PC-3 (cell line): ENCODE measurements at regions of chr13 and their contacts with region 1.

Region 1: GRCh38 chr13:27362064-27362883 is 62.1 kb upstream of the GTF3A start:
- DNase-seq: peak; percentile 88
- ATAC-seq: peak; percentile 86
- H3K4me3 ChIP-seq: peak overlapping the region; percentile 66
- H3K27ac ChIP-seq: no peak overlapping the region
- H3K4me1 ChIP-seq: peaks cover 7% of the 10 kb centered on the region
- H3K27me3 ChIP-seq: no peaks in the 10 kb centered on the region
- CTCF ChIP-seq: peak; percentile 82

Region 2: GRCh38 chr13:26929971-26930730 is 432.1 kb before region 1 on chr13:
- CTCF ChIA-PET with region 1: interaction called, 12 read pairs
- POLR2A ChIA-PET with region 1: no interaction called
- intact Hi-C with region 1: no loop called
- DNase-seq: peak; percentile 76
- ATAC-seq: peak; percentile 88
- H3K4me3 ChIP-seq: peak overlapping the region; percentile 34; the same call in 1 of the 2 replicates
- H3K27ac ChIP-seq: no peak overlapping the region
- H3K4me1 ChIP-seq: no peaks in the 10 kb centered on the region
- H3K27me3 ChIP-seq: peaks cover 26% of the 10 kb centered on the region
- CTCF ChIP-seq: peak; percentile 94

Region 3: DNA sequence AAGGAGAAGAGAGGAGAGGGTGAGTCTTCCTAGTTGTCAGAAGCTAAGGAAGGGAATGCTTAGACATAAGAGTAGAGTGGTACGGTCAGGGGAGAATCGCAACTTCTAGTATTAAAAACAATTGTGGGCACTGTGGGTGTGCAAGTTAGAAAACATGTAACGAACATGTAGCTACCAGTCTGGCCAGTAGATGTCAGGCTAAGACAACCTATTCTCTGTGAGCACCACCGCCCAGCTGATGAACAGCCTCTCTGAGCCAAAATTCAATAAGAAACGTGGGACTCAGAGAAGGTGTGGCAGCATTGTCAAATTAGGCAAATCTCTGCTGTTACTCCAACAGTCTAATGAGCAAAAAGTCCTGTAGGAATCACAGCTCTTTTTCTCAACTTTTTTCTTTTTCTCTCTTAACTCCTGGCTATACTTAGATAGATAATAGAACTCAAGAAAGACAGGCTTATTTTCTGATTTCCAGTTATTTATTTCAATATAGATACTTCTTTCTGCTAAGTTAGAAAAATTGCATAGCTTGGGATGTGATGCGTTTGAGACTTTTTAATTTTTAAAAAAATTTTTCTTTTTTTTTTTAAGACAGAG is 376.9 kb before region 1 on chr13:
- CTCF ChIA-PET with region 1: interaction called, 11 read pairs
- POLR2A ChIA-PET with region 1: no interaction called
- intact Hi-C with region 1: loop called (anchors 1 kb)
- DNase-seq: peak; percentile 87
- ATAC-seq: peak; percentile 63
- H3K4me3 ChIP-seq: peak overlapping the region; percentile 52
- H3K27ac ChIP-seq: peak overlapping the region; percentile 22; the same call in 1 of the 2 replicates
- H3K4me1 ChIP-seq: peaks cover 25% of the 10 kb centered on the region
- H3K27me3 ChIP-seq: no peaks in the 10 kb centered on the region
- CTCF ChIP-seq: peak; percentile 86

Region 4: GRCh38 chr13:27211771-27212364 is 150.4 kb before region 1 on chr13:
- CTCF ChIA-PET with region 1: no interaction called
- POLR2A ChIA-PET with region 1: no interaction called
- intact Hi-C with region 1: no loop called
- DNase-seq: peak; percentile 76
- ATAC-seq: peak; percentile 100
- H3K4me3 ChIP-seq: no peak overlapping the region
- H3K27ac ChIP-seq: peak overlapping the region; percentile 29; the same call in 1 of the 2 replicates
- H3K4me1 ChIP-seq: peaks cover 12% of the 10 kb centered on the region
- H3K27me3 ChIP-seq: no peaks in the 10 kb centered on the region
- CTCF ChIP-seq: no peak

Region 5: GRCh38 chr13:27374650-27375049 is 12.4 kb after region 1 on chr13:
- CTCF ChIA-PET with region 1: interaction called, 25 read pairs
- POLR2A ChIA-PET with region 1: interaction called, 7 read pairs
- intact Hi-C with region 1: no loop called
- DNase-seq: peak; percentile 89
- ATAC-seq: peak; percentile 84
- H3K4me3 ChIP-seq: peak overlapping the region; percentile 56
- H3K27ac ChIP-seq: peak overlapping the region; percentile 91
- H3K4me1 ChIP-seq: peaks cover 19% of the 10 kb centered on the region
- H3K27me3 ChIP-seq: no peaks in the 10 kb centered on the region
- CTCF ChIP-seq: peak; percentile 85

Region 6: DNA sequence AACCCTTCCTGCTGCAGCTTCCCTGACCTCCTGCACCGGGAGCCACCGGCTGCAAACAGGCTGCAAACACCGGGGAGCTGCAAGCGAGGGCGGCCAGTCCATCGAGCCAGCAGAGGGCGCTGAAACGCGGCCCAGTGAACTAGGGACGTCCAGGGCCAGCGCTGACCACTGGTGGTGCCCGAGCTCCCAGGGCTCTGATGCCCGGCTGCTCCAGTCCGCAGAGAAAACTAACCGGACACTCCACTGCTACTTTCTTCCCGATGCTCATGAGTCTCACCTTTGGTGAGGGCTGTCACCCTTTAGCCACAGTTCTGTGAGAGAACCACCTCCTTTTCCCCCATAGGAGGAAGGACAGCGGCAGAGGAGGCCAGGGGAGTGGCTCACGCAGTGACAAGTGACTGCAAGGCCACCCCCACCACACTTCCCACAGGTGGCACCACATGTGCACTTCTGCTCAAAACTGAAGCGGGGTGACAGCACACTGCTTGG is 170.9 kb after region 1 on chr13:
- CTCF ChIA-PET with region 1: interaction called, 11 read pairs
- POLR2A ChIA-PET with region 1: no interaction called
- intact Hi-C with region 1: no loop called
- DNase-seq: peak; percentile 80
- ATAC-seq: peak; percentile 99
- H3K4me3 ChIP-seq: peak overlapping the region; percentile 53; the same call in 1 of the 2 replicates
- H3K27ac ChIP-seq: no peak overlapping the region
- H3K4me1 ChIP-seq: no peaks in the 10 kb centered on the region
- H3K27me3 ChIP-seq: no peaks in the 10 kb centered on the region
- CTCF ChIP-seq: peak; percentile 92

Region 7: GRCh38 chr13:27868641-27869435 is 506.6 kb after region 1 on chr13:
- CTCF ChIA-PET with region 1: no interaction called
- POLR2A ChIA-PET with region 1: interaction called, 13 read pairs
- intact Hi-C with region 1: no loop called
- DNase-seq: peak; percentile 42
- ATAC-seq: no peak
- H3K4me3 ChIP-seq: no peak overlapping the region
- H3K27ac ChIP-seq: no peak overlapping the region
- H3K4me1 ChIP-seq: no peaks in the 10 kb centered on the region
- H3K27me3 ChIP-seq: peaks cover 39% of the 10 kb centered on the region
- CTCF ChIP-seq: peak; percentile 74

Region 8: GRCh38 chr13:27980280-27980998 is 618.2 kb after region 1 on chr13:
- CTCF ChIA-PET with region 1: interaction called, 5 read pairs
- POLR2A ChIA-PET with region 1: no interaction called
- intact Hi-C with region 1: loop called (anchors 1 kb)
- DNase-seq: no peak
- ATAC-seq: no peak
- H3K4me3 ChIP-seq: no peak overlapping the region
- H3K27ac ChIP-seq: no peak overlapping the region
- H3K4me1 ChIP-seq: no peaks in the 10 kb centered on the region
- H3K27me3 ChIP-seq: peaks cover 30% of the 10 kb centered on the region
- CTCF ChIP-seq: no peak